Panc1 (cell line): ENCODE measurements at regions of chr3 and their contacts with region 1.

Region 1: DNA sequence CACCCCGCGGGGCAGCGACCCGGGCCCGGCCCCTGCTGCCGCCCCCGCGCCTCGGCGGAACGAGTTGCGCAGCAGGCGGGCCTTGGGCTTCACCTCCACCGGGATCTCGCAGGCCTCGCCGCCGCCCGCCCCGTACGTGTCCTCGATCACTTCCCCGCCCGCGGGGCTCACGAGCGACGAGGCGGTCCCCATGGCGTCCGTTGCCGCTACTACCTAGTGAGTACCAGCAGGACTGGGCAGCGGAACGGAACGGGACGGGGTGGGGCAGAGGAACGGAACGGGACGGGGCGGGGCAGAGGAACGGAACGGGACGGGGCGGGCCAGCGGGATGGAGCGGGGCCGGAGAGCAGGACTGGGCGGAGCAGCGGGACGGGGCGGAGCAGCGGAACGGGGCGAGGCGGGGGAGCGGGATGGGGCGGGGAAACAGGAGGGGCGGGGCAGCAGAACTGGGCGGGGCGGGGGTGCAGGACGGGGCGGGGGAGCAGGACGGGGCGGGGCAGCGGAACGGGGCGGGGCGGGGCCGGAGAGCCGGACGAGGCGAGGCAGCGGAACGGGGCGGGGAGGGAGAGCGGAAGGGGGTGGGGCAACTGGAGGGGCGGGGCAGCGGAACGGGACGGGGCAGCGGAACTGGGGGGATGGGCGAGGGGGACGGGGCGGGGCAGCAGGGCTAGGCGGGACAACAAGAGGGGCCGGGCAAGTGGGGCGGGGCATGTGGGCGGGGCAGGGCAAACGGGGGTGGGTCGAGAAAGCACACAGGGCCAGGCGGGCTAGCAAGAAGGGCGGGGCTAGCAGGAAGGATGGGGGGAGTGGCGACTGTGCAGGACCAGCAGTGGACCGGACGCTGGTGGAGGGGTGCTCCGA is at the start of gene NPHP3:
- DNase-seq: peak; percentile 67
- ATAC-seq: peak; percentile 94
- H3K4me3 ChIP-seq: peak within 1 kb of the TSS; percentile 76 to 85
- H3K27ac ChIP-seq: peak within 1 kb of the TSS; percentile 90
- H3K4me1 ChIP-seq: peaks cover 27% of the 10 kb centered on the region
- H3K27me3 ChIP-seq: no peaks in the 10 kb centered on the region
- CTCF ChIP-seq: no peak
- total RNA-seq, gene NPHP3: 34.0 TPM

Region 2: DNA sequence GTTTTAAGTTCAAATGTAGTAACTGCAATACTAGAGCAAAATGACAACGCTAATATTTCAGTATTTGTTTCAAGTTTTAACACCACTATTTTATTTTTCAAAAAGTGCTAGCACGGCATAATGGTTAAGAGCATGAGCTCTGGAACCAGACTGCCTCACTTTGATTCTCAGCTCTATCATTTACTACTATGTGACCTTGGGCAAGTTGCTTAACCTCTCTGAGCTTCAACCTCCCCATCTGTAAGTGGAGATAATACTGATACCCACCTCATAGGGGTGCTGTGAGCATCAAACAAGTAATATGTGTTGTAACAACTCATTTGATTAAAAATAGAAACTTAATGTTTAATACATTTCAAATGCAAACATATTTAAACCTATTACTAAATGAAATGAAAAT is 115.2 kb after region 1 on chr3:
- CTCF ChIA-PET with region 1: no interaction called
- POLR2A ChIA-PET with region 1: no interaction called
- in situ Hi-C with region 1: no loop called
- intact Hi-C with region 1: loop called (anchors 5 kb)
- DNase-seq: no peak
- ATAC-seq: no peak
- H3K4me3 ChIP-seq: no peak overlapping the region
- H3K27ac ChIP-seq: no peak overlapping the region
- H3K4me1 ChIP-seq: no peaks in the 10 kb centered on the region
- H3K27me3 ChIP-seq: peaks cover 8% of the 10 kb centered on the region
- CTCF ChIP-seq: no peak

Region 3: GRCh38 chr3:133384331-133385027 is 662.1 kb after region 1 on chr3:
- CTCF ChIA-PET with region 1: no interaction called
- POLR2A ChIA-PET with region 1: no interaction called
- in situ Hi-C with region 1: no loop called
- intact Hi-C with region 1: loop called (anchors 2 kb)
- DNase-seq: peak; percentile 25
- ATAC-seq: peak; percentile 76
- H3K4me3 ChIP-seq: no peak overlapping the region
- H3K27ac ChIP-seq: peak overlapping the region; percentile 58; the same call in 1 of the 2 replicates
- H3K4me1 ChIP-seq: 0 out of 2 replicates have a peak, but pooled peaks cover 7% of the 10 kb centered on the region
- H3K27me3 ChIP-seq: no peaks in the 10 kb centered on the region
- CTCF ChIP-seq: peak; percentile 84

Region 4: DNA sequence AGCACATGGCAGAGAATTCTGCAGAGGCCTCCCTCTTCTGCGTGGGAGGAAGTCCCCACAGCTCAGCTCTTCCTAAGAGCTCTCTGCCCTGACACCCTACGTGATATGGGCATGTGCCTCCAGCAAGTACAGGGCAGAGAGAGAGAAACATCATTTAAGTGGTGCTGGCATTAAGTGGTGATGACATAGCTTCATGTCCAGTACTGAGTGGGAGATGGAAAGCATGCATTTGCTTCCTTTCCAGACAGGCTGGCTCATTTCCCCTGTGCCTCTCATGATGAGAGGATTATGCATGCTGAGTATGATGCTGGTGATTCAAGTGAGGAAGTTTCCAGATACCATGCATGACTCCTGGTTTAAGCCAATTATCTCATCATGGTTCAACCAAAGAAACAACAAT is 704.3 kb after region 1 on chr3:
- CTCF ChIA-PET with region 1: interaction called, 15 read pairs
- POLR2A ChIA-PET with region 1: no interaction called
- in situ Hi-C with region 1: no loop called
- intact Hi-C with region 1: no loop called
- DNase-seq: no peak
- ATAC-seq: no peak
- H3K4me3 ChIP-seq: no peak overlapping the region
- H3K27ac ChIP-seq: peak overlapping the region; percentile 32
- H3K4me1 ChIP-seq: peaks cover 17% of the 10 kb centered on the region
- H3K27me3 ChIP-seq: no peaks in the 10 kb centered on the region
- CTCF ChIP-seq: no peak

Region 5: DNA sequence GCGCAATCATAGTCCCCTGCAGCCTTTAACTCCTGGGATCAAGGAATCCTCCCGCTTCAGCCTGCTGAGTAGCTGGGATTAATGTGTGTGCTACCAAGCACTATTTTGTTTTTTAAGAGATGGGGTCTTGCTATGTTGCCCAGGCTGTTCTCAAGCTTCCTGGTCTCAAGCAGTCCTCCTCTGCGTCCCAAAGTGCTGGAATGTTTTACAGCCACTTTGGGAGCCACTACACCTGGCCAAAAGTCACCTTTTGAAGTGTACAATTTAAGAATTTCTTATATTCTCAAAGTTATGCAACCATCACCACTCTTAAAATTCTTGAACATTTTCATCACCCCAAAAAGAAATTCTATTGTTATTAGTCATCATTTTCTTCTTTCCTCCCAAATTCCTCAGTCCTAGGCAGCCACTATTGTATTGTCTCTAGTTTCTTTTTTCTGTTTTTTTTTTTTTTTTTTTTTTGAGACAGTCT is 868.9 kb after region 1 on chr3:
- CTCF ChIA-PET with region 1: no interaction called
- POLR2A ChIA-PET with region 1: no interaction called
- in situ Hi-C with region 1: no loop called
- intact Hi-C with region 1: loop called (anchors 10 kb)
- DNase-seq: no peak
- ATAC-seq: peak; percentile 48
- H3K4me3 ChIP-seq: no peak overlapping the region
- H3K27ac ChIP-seq: peak overlapping the region; percentile 36
- H3K4me1 ChIP-seq: peaks cover 49% of the 10 kb centered on the region
- H3K27me3 ChIP-seq: no peaks in the 10 kb centered on the region
- CTCF ChIP-seq: no peak